PC-9 (cell line): ENCODE measurements at regions of chr22 and their contacts with region 1.

Region 1: DNA sequence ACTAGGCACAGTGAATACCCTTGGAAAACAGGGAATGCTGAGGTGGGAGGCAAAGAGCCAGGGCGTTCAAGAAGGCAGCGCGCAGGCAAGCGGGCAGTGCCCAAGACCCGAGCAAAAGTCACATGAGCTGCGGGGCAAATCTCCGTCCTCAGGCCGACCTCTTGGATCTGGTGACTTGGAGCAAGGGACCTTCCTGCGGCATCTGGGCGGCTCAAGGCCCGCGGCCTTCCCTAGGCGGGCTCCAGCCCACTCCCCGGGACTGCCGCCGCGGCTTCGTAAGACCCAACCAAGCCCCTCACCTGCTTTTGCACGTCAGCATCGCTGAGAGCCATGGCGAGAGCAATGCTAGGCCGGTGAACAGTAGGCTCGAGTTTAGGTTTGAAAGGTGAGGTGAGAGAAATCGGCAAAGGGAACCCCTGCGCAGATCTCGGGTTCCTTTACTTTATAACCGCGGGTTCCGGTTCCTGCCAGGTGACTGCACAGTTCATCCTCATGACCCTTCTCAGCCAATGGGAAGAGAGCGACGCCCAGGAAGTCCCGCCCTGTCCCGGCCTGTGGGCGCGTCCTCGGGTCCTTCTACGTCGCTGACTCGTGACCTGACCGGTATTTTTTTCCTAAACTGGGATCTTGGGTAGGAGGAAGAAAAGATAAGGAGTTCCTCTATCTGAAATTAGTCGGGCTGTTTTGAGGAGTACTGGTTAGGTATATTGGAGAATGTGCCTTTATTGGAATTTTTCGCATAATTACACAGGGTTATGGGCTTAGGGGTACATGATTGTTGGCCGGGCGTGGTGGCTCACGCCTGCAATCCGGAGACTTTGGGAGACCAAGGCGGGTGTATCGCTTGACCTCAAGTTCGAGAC is at the start of gene ATP6V1E1:
- DNase-seq: peak; percentile 89 to 90
- H3K4me3 ChIP-seq: peak within 1 kb of the TSS; percentile 94
- H3K27ac ChIP-seq: peak within 1 kb of the TSS; percentile 78
- H3K4me1 ChIP-seq: peaks cover 25% of the 10 kb centered on the region
- H3K27me3 ChIP-seq: no peaks in the 10 kb centered on the region
- CTCF ChIP-seq: no peak
- total RNA-seq, gene ATP6V1E1: 53.5 and 58.0 TPM in 2 replicates

Region 2: GRCh38 chr22:17576470-17576869 is 52.1 kb before region 1 on chr22:
- CTCF ChIA-PET with region 1: no interaction called
- POLR2A ChIA-PET with region 1: no interaction called
- intact Hi-C with region 1: loop called (anchors 1 kb)
- DNase-seq: peak; percentile 74 to 94
- H3K4me3 ChIP-seq: no peak overlapping the region
- H3K27ac ChIP-seq: peak overlapping the region; percentile 76
- H3K4me1 ChIP-seq: peaks cover 14% of the 10 kb centered on the region; the same call in 1 of the 2 replicates
- H3K27me3 ChIP-seq: no peaks in the 10 kb centered on the region
- CTCF ChIP-seq: no peak

Region 3: DNA sequence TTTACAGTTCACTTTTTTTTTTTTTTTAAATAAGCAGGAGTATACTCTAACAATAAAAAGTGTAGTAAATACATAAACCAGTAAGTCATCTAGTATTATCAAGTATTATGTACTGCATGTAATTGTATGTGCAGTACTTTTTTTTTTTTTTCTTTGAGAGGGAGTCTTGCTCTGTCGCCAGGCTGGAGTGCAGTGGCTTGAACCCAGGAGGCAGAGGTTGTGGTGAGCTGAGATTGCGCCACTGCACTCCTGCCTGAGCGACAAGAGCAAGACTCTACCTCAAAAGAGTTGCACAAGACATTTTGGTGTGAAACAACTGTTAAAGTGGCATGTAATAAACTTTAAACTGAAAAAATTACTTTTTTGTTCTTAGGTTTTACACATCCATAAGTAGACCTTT is 26.8 kb after region 1 on chr22:
- CTCF ChIA-PET with region 1: no interaction called
- POLR2A ChIA-PET with region 1: interaction called, 11 read pairs
- intact Hi-C with region 1: no loop called
- DNase-seq: no peak
- H3K4me3 ChIP-seq: no peak overlapping the region
- H3K27ac ChIP-seq: no peak overlapping the region
- H3K4me1 ChIP-seq: no peaks in the 10 kb centered on the region
- H3K27me3 ChIP-seq: no peaks in the 10 kb centered on the region
- CTCF ChIP-seq: no peak

Region 4: GRCh38 chr22:17706018-17706900 is 77.7 kb after region 1 on chr22:
- CTCF ChIA-PET with region 1: no interaction called
- POLR2A ChIA-PET with region 1: no interaction called
- intact Hi-C with region 1: loop called (anchors 2 kb)
- DNase-seq: peak; percentile 59 to 84
- H3K4me3 ChIP-seq: peak overlapping the region; percentile 40; the same call in 1 of the 2 replicates
- H3K27ac ChIP-seq: peak overlapping the region; percentile 95
- H3K4me1 ChIP-seq: peaks cover 21% of the 10 kb centered on the region
- H3K27me3 ChIP-seq: no peaks in the 10 kb centered on the region
- CTCF ChIP-seq: no peak